Astrocyte of the cerebellum (primary cell): ENCODE measurements at regions of chr14 and their contacts with region 1.

Region 1: GRCh38 chr14:34099635-34100034 is 148.8 kb upstream of the EGLN3 start:
- DNase-seq: no peak
- H3K4me3 ChIP-seq: no peak overlapping the region
- CTCF ChIP-seq: no peak

Region 2: GRCh38 chr14:34007902-34008301 is 91.7 kb before region 1 on chr14:
- in situ Hi-C with region 1: loop called (anchors 5 kb)
- DNase-seq: no peak
- H3K4me3 ChIP-seq: no peak overlapping the region
- CTCF ChIP-seq: no peak

Region 3: DNA sequence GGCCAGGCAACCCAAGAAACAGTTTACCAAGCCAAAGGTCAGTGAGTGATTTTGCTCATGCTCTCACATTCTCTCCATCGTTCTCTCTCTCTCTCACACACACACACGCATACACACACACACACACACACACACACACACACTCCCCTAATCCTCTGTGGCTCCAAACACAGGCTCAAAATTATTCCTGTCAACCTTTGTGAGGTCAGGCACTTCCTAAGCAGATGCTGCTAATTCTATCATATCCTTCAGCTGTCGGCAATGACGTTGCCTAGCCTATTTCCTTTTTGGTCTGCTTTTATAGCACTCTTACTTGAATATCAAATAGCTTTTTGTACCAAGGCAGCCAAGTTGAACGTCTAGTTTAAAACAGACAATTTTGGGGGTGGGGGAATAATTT is 49.8 kb before region 1 on chr14:
- in situ Hi-C with region 1: loop called (anchors 5 kb)
- DNase-seq: no peak
- H3K4me3 ChIP-seq: no peak overlapping the region
- CTCF ChIP-seq: no peak

Region 4: GRCh38 chr14:34180460-34180868 is 80.8 kb after region 1 on chr14:
- in situ Hi-C with region 1: no loop called
- DNase-seq: no peak
- H3K4me3 ChIP-seq: no peak overlapping the region
- CTCF ChIP-seq: no peak